ENCODE measurements at regions of chr10 and their contacts with region 1.

Region 1: DNA sequence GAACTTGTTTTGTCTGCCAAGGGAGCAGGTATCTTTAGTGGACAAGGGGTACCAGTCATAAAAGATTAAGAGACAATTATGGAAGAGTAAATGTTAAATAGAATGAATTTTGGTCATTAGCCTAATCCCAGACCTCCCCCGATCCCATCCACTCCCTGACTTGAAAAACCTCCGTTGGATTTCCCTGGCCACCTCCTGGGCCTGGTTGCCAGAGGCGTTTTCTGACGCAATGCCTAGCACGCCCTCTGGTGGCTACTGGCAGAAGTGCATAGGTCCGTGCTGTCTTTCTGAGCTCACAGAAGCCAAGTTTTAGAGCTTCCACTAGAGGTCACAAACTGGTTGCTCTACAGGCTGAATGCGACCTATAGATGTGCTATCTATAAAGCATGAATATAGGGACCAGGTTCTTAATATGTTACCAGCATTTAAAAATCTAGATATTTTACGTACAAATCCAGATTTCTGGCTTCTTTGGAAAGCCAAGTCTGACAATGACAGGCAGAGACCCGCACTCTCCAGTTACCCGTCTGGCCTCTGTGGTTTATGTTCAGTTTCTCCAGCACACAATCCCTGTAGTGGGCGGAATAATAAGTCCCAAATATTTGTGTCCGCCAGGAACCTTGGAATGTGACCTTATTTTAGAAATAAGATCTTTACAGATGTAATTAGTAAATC is 39.8 kb downstream of the SPOCK2 start:
- H3K4me3 ChIP-seq: no peak overlapping the region
- H3K27ac ChIP-seq: no peak overlapping the region
- H3K4me1 ChIP-seq: no peaks in the 10 kb centered on the region
- CTCF ChIP-seq: peak; percentile 98

Region 2: GRCh38 chr10:70537344-70538209 is 1511.0 kb before region 1 on chr10:
- CTCF ChIA-PET with region 1: interaction called, 11 read pairs
- POLR2A ChIA-PET with region 1: no interaction called
- H3K4me3 ChIP-seq: no peak overlapping the region
- H3K27ac ChIP-seq: no peak overlapping the region
- H3K4me1 ChIP-seq: no peaks in the 10 kb centered on the region
- CTCF ChIP-seq: no peak

Region 3: DNA sequence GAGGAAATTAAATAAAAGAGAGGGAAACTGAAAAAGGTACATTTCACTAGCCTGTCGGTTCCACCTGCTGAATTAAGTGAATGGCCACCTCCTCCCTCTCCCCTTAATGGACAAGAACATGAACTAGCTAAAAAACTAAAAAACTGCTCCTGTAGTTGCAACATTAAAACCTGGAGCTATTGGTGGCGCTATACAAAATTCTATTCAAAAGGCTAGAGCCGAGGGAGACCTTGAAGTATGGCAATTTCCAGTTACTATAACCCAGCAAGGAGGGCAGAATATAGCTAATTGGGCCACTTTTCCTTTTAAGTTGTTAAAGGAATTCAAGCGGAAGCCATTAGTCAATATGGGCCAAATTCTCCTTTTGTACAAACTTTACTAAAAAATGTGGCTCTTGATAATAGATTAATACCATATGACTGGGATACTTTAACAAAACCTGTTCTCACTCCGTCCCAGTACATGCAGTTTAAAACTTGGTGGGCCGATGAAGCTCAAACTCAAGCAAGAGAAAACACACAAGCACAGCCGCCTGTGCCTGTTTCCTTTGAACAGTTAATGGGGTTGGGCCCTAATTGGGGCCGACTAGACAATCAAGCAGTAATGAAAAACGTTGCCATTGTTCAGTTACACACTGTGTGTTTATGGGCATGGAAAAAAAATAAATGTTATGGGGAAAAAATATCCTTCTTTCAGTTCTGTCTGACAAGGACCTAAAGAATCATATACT is 90.9 kb before region 1 on chr10:
- CTCF ChIA-PET with region 1: interaction called, 86 read pairs
- POLR2A ChIA-PET with region 1: no interaction called
- H3K4me3 ChIP-seq: no peak overlapping the region
- H3K27ac ChIP-seq: no peak overlapping the region
- H3K4me1 ChIP-seq: no peaks in the 10 kb centered on the region
- CTCF ChIP-seq: no peak

Region 4: GRCh38 chr10:71999360-72000072 is 49.1 kb before region 1 on chr10:
- CTCF ChIA-PET with region 1: interaction called, 12 read pairs
- POLR2A ChIA-PET with region 1: no interaction called
- H3K4me3 ChIP-seq: no peak overlapping the region
- H3K27ac ChIP-seq: peak overlapping the region; percentile 45
- H3K4me1 ChIP-seq: peaks cover 12% of the 10 kb centered on the region
- CTCF ChIP-seq: no peak

Region 5: GRCh38 chr10:72061491-72061890 is 12.9 kb after region 1 on chr10:
- CTCF ChIA-PET with region 1: interaction called, 16 read pairs
- POLR2A ChIA-PET with region 1: no interaction called
- H3K4me3 ChIP-seq: no peak overlapping the region
- H3K27ac ChIP-seq: no peak overlapping the region
- H3K4me1 ChIP-seq: peaks cover 16% of the 10 kb centered on the region
- CTCF ChIP-seq: peak; percentile 85

Region 6: GRCh38 chr10:72337020-72337629 is 288.5 kb after region 1 on chr10:
- CTCF ChIA-PET with region 1: interaction called, 16 read pairs
- POLR2A ChIA-PET with region 1: interaction called, 3 read pairs
- H3K4me3 ChIP-seq: no peak overlapping the region
- H3K27ac ChIP-seq: no peak overlapping the region
- H3K4me1 ChIP-seq: peaks cover 14% of the 10 kb centered on the region
- CTCF ChIP-seq: peak; percentile 94